Activated CD4-positive, alpha-beta T cell treated with anti-CD3 and anti-CD28 coated beads for 36 hours (primary cell): ENCODE measurements at regions of chr1 and their contacts with region 1.

Region 1: DNA sequence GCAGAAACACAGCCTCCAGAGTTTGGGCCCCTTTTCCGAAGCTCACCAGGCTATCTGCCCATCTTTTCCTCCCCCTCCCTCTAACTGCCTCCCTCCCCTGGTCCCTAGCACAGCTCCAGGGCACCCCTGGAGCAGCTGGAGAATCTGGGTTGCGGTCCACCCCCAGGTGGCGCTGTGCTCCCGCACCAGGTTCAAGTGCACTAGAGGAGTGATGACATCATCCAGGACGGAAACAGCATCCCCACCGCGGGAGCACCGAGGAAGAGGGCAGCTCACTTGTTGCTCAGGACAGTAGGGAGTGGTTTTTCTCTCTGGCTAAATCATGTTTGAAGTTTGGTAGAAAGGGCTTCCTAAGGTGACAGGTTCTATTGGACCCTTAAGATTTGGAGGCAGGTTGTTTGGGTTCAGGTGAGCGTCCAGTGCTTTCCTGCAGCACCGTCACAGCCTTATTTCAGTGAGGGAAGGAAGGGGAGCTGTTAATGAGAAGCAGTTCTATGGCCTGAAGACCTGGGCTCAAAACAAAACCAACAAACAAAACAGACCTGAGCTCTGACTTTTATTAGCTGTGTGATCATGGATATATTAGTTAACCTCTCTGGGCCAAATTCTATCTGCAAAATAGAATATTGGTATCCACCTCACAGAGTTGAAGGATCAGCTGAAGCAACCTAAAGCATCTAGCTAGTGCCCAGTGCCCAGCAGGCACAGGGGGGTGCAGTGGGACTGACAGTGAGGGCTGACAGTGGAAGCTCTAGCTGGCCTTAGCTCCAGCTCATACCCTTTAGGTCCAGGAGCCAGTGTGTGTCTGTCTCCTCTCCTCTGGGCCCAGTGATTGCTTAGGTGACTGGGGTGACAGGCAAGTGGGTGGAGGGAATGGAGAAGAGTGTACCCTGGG is 7.5 kb downstream of the SHISA4 start:
- DNase-seq: peak; percentile 94
- ATAC-seq: peak; percentile 96
- H3K4me3 Mint-ChIP-seq: peak overlapping the region; percentile 41
- H3K27ac Mint-ChIP-seq: peak overlapping the region; percentile 56
- H3K4me1 Mint-ChIP-seq: peaks cover 5% of the 10 kb centered on the region
- H3K27me3 Mint-ChIP-seq: peaks cover 11% of the 10 kb centered on the region

Region 2: DNA sequence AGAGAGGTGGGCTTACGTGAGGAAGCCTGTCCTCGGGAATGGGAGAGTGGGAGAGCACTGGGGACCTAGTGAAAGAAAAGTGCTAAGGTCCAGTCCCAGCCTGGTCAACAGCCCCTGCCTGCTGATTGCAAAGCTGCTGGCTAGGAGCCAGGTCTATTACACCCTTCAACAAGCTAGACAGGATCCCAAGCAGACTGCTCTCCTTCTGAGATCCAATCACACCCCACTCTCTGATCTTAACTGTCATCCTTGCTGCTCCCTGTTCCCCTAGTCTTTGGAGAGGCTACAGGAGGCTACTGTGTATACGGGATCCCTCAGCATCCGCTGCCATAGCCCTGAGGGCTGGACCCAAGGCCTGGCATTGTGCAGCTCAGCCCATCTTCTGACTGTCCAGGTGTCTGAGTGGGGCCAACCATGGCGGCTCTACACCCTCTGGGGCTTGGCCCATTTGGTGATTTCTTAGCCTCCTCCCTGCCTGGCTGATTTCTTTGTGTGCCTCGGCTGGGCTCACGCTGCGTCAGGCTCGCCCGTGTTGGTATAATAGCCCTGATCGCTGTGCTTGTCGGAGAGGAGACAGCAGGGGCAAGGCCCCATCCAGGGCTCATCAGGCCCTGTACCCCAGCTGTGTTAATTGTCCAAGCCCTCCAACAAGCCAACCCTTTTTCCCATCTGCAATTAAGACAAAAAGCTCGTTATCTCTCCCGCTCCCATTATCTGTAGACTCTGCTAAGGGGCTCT is 313.3 kb before region 1 on chr1:
- CTCF ChIA-PET with region 1: no interaction called
- POLR2A ChIA-PET with region 1: no interaction called
- intact Hi-C with region 1: no loop called
- DNase-seq: no peak
- ATAC-seq: no peak
- H3K4me3 Mint-ChIP-seq: no peak overlapping the region
- H3K27ac Mint-ChIP-seq: no peak overlapping the region
- H3K4me1 Mint-ChIP-seq: no peaks in the 10 kb centered on the region
- H3K27me3 Mint-ChIP-seq: no peaks in the 10 kb centered on the region

Region 3: DNA sequence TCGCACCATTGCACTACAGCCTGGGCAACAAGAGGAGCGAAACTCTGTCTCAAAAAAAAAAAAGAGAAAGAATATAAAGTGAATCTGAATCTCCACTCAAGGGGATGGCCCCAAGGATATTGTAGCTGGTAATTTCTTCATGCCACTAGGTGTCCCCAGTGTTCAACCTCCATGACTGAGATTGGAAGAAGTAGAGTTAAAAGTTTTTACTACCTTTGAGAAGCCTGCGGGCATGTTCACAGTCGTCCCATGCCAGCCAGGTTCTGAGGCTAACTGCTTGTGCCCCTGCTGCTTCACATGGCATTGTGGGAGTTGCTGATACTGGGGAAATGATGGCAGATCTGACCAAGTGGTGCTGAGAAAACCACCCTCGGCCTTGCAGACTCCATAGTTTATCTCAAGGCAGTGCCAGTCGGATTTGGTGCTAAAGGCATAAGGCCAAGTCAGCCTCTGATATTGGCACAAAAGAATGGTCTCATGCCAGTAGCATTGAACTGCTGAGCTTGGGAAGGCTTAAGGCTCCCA is 18.2 kb before region 1 on chr1:
- CTCF ChIA-PET with region 1: interaction called, 26 read pairs
- POLR2A ChIA-PET with region 1: no interaction called
- intact Hi-C with region 1: no loop called
- DNase-seq: peak; percentile 44
- ATAC-seq: peak; percentile 77
- H3K4me3 Mint-ChIP-seq: no peak overlapping the region
- H3K27ac Mint-ChIP-seq: no peak overlapping the region
- H3K4me1 Mint-ChIP-seq: no peaks in the 10 kb centered on the region
- H3K27me3 Mint-ChIP-seq: no peaks in the 10 kb centered on the region

Region 4: GRCh38 chr1:201955009-201955728 is 59.0 kb after region 1 on chr1 and contains the start of gene TIMM17A:
- CTCF ChIA-PET with region 1: interaction called, 15 read pairs
- POLR2A ChIA-PET with region 1: interaction called, 4 read pairs
- intact Hi-C with region 1: loop called (anchors 1 to 5 kb)
- DNase-seq: peak; percentile 97
- ATAC-seq: peak; percentile 100
- H3K4me3 Mint-ChIP-seq: peak within 1 kb of the TSS; percentile 99
- H3K27ac Mint-ChIP-seq: peak within 1 kb of the TSS; percentile 97
- H3K4me1 Mint-ChIP-seq: peaks cover 16% of the 10 kb centered on the region
- H3K27me3 Mint-ChIP-seq: no peaks in the 10 kb centered on the region
- total RNA-seq, gene TIMM17A: 51.9 to 70.6 TPM

Region 5: DNA sequence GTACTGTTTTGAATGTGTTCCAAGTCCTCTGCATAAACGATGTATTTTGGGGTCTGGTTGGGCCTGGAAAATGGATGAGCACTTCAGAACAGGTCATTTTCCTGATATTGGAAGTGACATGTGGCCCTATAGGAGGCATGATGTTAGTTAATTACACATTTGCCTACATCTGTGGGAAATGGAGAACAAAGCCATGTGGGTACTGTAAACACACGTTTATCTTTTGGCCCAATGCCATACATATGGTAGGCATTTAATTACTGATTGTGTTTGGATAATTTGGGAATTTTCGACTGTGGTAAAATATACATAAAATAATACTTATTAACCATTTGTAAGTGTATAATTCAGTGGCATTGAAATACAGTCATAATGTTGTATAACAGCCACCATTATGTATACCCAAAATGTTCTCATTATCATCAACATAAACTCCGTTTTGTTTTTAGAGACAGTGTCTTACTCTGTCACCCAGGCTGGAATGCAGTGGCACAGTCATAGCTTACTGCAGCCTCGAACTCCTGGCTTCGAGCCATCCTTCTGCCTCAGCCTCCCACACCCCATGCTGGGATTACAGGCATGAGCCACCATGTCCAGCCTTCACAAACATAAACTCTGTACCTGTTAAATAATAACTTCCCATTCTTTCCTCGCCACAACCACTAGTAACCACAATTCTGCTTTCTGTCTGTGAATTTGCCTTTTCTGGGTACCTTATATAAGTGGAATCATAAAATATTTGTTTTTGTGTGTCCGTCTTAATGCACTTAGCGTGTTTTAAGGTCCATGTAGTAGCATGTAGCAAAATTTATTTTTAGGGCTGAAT is 74.4 kb after region 1 on chr1:
- CTCF ChIA-PET with region 1: interaction called, 93 read pairs
- POLR2A ChIA-PET with region 1: interaction called, 7 read pairs
- intact Hi-C with region 1: loop called (anchors 1 kb)
- DNase-seq: no peak
- ATAC-seq: no peak
- H3K4me3 Mint-ChIP-seq: no peak overlapping the region
- H3K27ac Mint-ChIP-seq: no peak overlapping the region
- H3K4me1 Mint-ChIP-seq: no peaks in the 10 kb centered on the region
- H3K27me3 Mint-ChIP-seq: no peaks in the 10 kb centered on the region

Region 6: GRCh38 chr1:201999625-202000238 is 103.6 kb after region 1 on chr1:
- CTCF ChIA-PET with region 1: interaction called, 44 read pairs
- POLR2A ChIA-PET with region 1: no interaction called
- intact Hi-C with region 1: loop called in 1 of 2 experiments (anchors 1 kb)
- DNase-seq: peak; percentile 45
- ATAC-seq: peak; percentile 90
- H3K4me3 Mint-ChIP-seq: no peak overlapping the region
- H3K27ac Mint-ChIP-seq: no peak overlapping the region
- H3K4me1 Mint-ChIP-seq: no peaks in the 10 kb centered on the region
- H3K27me3 Mint-ChIP-seq: no peaks in the 10 kb centered on the region

Region 7: DNA sequence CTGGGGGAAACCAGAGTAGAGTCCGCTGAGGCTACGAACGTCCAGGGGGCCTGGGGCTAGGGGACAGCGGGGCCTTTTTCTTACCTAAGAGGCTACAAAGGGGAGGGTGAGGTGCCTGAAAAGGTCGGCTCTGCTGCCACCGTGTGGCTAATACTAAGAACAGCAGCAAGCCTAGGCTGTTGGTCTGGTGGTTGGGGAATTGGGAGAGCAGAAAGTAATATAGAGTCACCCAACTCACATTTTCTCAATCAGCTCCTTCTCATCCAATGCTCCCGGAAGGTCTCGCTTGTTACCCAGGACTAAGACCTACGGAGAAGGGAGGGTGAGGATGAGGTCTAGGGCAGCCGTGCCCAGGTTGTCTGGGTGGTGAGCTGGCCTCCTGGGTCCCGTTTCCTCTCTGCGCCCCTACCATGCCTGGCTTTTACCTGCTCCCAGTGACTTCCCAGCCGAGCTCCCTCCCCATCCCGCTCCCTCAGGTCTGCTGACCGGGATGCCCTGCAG is 239.1 kb after region 1 on chr1:
- CTCF ChIA-PET with region 1: interaction called, 7 read pairs
- POLR2A ChIA-PET with region 1: no interaction called
- intact Hi-C with region 1: loop called (anchors 1 kb)
- DNase-seq: peak; percentile 70
- ATAC-seq: peak; percentile 87
- H3K4me3 Mint-ChIP-seq: no peak overlapping the region
- H3K27ac Mint-ChIP-seq: no peak overlapping the region
- H3K4me1 Mint-ChIP-seq: no peaks in the 10 kb centered on the region
- H3K27me3 Mint-ChIP-seq: no peaks in the 10 kb centered on the region